ENCODE measurements at regions of chr7 and their contacts with region 1.

Region 1: GRCh38 chr7:22110227-22110839 is 164.6 kb upstream of the CDCA7L start:
- H3K4me3 ChIP-seq: no peak overlapping the region
- H3K27ac ChIP-seq: no peak overlapping the region
- H3K4me1 ChIP-seq: no peaks in the 10 kb centered on the region
- CTCF ChIP-seq: peak; percentile 82

Region 2: GRCh38 chr7:22060197-22060596 is 50.1 kb before region 1 on chr7:
- CTCF ChIA-PET with region 1: no interaction called
- POLR2A ChIA-PET with region 1: no interaction called
- H3K4me3 ChIP-seq: no peak overlapping the region
- H3K27ac ChIP-seq: no peak overlapping the region
- H3K4me1 ChIP-seq: no peaks in the 10 kb centered on the region
- CTCF ChIP-seq: no peak

Region 3: GRCh38 chr7:22094413-22095342 is 15.7 kb before region 1 on chr7:
- CTCF ChIA-PET with region 1: interaction called, 20 read pairs
- POLR2A ChIA-PET with region 1: no interaction called
- H3K4me3 ChIP-seq: no peak overlapping the region
- H3K27ac ChIP-seq: no peak overlapping the region
- H3K4me1 ChIP-seq: no peaks in the 10 kb centered on the region
- CTCF ChIP-seq: no peak

Region 4: GRCh38 chr7:22137466-22137865 is 27.1 kb after region 1 on chr7:
- CTCF ChIA-PET with region 1: interaction called, 15 read pairs
- POLR2A ChIA-PET with region 1: no interaction called
- H3K4me3 ChIP-seq: no peak overlapping the region
- H3K27ac ChIP-seq: no peak overlapping the region
- H3K4me1 ChIP-seq: no peaks in the 10 kb centered on the region
- CTCF ChIP-seq: no peak

Region 5: GRCh38 chr7:22156205-22156604 is 45.9 kb after region 1 on chr7:
- CTCF ChIA-PET with region 1: no interaction called
- POLR2A ChIA-PET with region 1: no interaction called
- H3K4me3 ChIP-seq: no peak overlapping the region
- H3K27ac ChIP-seq: no peak overlapping the region
- H3K4me1 ChIP-seq: no peaks in the 10 kb centered on the region
- CTCF ChIP-seq: no peak

Region 6: DNA sequence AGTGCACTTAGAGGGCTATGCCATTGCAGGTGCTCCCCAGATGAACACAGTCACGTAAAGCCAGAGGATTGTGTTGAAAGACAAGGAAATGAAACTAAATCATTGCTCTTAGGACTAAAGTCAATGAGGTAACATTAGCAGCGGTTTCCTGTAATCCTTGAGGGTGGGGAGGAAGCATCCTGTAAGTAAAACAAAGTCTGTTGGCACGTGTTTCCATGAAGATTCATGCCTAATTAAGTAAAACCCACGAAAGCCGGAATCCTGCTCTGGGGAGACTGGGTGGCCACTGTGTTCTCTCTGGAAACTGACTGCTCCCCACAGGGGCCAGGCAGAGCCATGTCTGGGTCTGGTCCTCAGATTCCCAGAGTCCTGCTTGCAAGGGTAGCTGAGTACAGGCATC is 371.4 kb after region 1 on chr7:
- CTCF ChIA-PET with region 1: interaction called, 21 read pairs
- POLR2A ChIA-PET with region 1: no interaction called
- H3K4me3 ChIP-seq: no peak overlapping the region
- H3K27ac ChIP-seq: no peak overlapping the region
- H3K4me1 ChIP-seq: no peaks in the 10 kb centered on the region
- CTCF ChIP-seq: no peak

Region 7: DNA sequence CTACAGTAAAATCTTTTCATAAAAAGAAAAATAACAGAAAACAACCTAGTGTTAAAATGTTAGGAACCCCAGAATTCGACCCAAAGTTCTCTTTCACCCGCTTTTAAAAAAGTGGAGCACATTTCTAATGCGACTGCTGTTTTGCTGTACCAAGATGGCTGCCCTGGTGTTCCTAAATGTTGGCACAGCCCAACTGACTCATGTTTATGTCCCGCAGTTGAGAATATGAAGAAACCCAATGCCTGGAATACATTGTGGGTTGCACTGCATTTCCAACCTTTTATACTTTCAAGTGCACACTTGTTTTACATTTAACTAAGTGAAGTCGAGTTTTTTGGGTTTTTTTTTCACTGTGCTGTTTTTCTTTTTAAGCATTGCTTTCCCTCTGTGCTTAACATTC is 388.7 kb after region 1 on chr7:
- CTCF ChIA-PET with region 1: interaction called, 25 read pairs
- POLR2A ChIA-PET with region 1: no interaction called
- H3K4me3 ChIP-seq: no peak overlapping the region
- H3K27ac ChIP-seq: no peak overlapping the region
- H3K4me1 ChIP-seq: no peaks in the 10 kb centered on the region
- CTCF ChIP-seq: no peak